Activated T-helper 2 cell treated with anti-CD3 and anti-CD28 coated beads, Interferon-gamma antibody, Interleukin-2, Interleukin-4, amounts not matched to agents 10 μg/mL and 5 μg/mL and 100 μg/mL, durations not matched to agents 14 hours and 24 hours and 36 hours (primary cell): ENCODE measurements at regions of chr10 and their contacts with region 1.

Region 1: GRCh38 chr10:19683960-19684359 is 132.3 kb upstream of the PLXDC2 start:
- DNase-seq: no peak
- H3K4me3 Mint-ChIP-seq: no peak overlapping the region
- H3K27ac Mint-ChIP-seq: no peak overlapping the region
- H3K4me1 Mint-ChIP-seq: no peaks in the 10 kb centered on the region
- H3K27me3 Mint-ChIP-seq: no peaks in the 10 kb centered on the region

Region 2: GRCh38 chr10:19663344-19663743 is 20.6 kb before region 1 on chr10:
- intact Hi-C with region 1: loop called (anchors 2 kb)
- DNase-seq: no peak
- H3K4me3 Mint-ChIP-seq: no peak overlapping the region
- H3K27ac Mint-ChIP-seq: no peak overlapping the region
- H3K4me1 Mint-ChIP-seq: no peaks in the 10 kb centered on the region
- H3K27me3 Mint-ChIP-seq: no peaks in the 10 kb centered on the region